PC-9 (cell line): ENCODE measurements at regions of chr5 and their contacts with region 1.

Region 1: DNA sequence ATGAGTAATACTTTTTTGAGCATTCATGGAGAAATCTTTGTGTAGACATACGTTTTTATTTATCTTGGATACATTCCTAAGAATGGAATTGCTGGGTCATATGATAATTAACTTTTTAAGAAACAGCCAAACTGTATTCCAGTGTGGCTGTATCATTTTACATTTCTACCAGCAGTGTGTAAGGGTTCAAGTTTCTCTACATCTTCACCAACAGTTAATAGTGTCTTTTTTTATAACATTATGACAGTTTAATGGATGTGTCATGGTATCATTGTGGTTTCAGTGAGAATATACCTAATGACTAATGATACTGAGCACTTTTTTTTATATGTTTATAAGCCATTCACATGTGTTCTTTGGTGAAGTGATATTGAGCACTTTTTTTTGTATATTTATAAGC is 52.4 kb downstream of the NIPBL start:
- DNase-seq: peak in 1 of 2 experiments; percentile 80
- H3K4me3 ChIP-seq: no peak overlapping the region
- H3K27ac ChIP-seq: peak overlapping the region; percentile 69
- H3K4me1 ChIP-seq: peaks cover 18% of the 10 kb centered on the region
- H3K27me3 ChIP-seq: no peaks in the 10 kb centered on the region
- CTCF ChIP-seq: no peak

Region 2: GRCh38 chr5:36908544-36909260 is 20.2 kb before region 1 on chr5:
- CTCF ChIA-PET with region 1: no interaction called
- POLR2A ChIA-PET with region 1: interaction called, 19 read pairs
- intact Hi-C with region 1: no loop called
- DNase-seq: peak in 1 of 2 experiments; percentile 4
- H3K4me3 ChIP-seq: no peak overlapping the region
- H3K27ac ChIP-seq: no peak overlapping the region
- H3K4me1 ChIP-seq: 0 out of 2 replicates have a peak, but pooled peaks cover 12% of the 10 kb centered on the region
- H3K27me3 ChIP-seq: no peaks in the 10 kb centered on the region
- CTCF ChIP-seq: no peak

Region 3: GRCh38 chr5:36944607-36945225 is 15.8 kb after region 1 on chr5:
- CTCF ChIA-PET with region 1: no interaction called
- POLR2A ChIA-PET with region 1: no interaction called
- intact Hi-C with region 1: loop called (anchors 1 kb)
- DNase-seq: peak in 1 of 2 experiments; percentile 67
- H3K4me3 ChIP-seq: no peak overlapping the region
- H3K27ac ChIP-seq: no peak overlapping the region
- H3K4me1 ChIP-seq: peaks cover 7% of the 10 kb centered on the region
- H3K27me3 ChIP-seq: no peaks in the 10 kb centered on the region
- CTCF ChIP-seq: peak; percentile 91